ENCODE measurements at regions of chr7 and their contacts with region 1.

Region 1: DNA sequence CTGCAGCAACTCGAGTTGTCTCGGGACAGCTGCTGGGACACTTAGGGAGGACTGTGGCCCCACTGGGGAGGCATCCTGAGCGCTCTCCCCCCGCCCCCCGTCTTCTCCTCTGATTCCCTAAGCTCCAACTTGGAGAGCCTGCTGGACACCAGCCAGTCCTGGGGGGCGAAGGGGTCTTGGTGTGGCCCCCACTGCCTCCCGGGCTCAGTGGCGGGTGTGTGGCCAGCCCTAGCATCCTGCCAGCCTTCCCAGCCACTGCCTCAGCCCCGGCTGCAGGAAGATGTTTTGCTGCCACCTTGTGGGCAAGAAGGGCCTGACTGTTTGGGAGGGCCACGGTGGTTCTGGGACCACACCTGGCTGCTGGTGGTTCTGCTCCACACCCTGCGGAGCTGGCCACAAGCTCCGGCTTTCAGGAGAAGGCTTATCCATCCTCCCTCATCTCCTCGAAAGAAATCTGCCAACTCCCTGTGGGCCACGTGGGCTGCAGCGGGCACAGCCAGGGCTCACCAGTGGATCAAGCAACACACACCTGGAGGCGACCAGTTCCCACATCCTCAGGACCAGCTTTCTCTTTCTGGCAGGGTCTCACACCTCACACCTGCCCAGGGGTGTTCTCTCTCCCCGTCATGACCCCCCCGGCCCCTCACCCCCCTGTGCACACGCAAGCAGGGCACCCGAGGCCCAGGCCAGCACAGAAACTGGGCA is 24.8 kb downstream of the AGAP3 start:
- DNase-seq: no peak
- H3K4me3 ChIP-seq: no peak overlapping the region
- H3K27me3 ChIP-seq: no peaks in the 10 kb centered on the region
- CTCF ChIP-seq: peak; percentile 91

Region 2: GRCh38 chr7:150898475-150899011 is 212.6 kb before region 1 on chr7:
- CTCF ChIA-PET with region 1: interaction called, 16 read pairs
- POLR2A ChIA-PET with region 1: no interaction called
- DNase-seq: no peak
- H3K4me3 ChIP-seq: no peak overlapping the region
- H3K27me3 ChIP-seq: peaks cover 4% of the 10 kb centered on the region
- CTCF ChIP-seq: peak; percentile 96

Region 3: DNA sequence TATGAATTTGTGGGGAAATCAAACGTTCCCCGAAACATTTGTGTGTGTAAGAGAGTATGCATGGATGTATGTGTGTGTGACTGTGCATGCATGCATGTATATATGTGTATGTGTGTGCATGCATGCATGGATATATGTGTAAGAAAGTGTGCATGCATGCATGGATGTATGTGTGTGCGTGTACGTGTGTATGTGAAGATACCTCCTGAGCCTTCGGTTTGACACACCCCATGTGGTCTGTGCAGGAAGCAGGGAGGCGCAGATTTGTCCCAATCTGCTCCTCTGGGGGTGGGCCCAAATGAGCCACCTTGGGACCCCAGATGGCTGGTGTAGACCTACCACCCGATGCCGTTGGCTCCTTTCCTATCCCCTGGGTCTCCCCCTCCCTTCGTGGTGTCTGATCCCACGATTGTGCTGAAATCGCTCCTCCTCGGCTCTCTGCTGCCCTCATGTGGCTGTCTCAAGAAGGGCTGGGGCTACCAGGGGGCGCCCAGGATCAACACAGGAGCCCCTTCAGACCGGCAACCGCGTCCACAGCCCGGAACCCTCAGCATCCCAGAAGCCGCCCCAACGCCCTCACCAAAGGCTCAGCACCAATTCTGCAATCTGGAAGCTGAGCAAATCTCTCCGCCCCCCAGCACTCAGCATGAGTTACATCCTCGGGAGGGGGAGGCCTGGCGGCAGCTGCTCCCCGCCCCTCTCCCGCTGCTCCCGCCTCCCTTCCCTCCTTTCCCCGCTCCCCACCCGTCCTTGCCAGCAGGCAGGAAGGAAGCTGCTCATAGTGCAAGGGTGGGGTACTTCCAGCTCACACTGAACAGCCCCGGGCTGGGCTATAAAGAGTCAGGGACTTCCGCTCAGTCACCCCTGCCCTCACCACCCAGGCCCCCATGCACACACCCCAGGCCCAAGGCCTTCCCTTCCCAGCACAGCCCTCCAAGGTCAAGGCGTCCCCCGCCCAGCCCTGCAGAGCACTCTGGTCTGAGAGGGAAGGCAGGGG is 122.6 kb before region 1 on chr7:
- CTCF ChIA-PET with region 1: interaction called, 14 read pairs
- POLR2A ChIA-PET with region 1: no interaction called
- DNase-seq: no peak
- H3K4me3 ChIP-seq: no peak overlapping the region
- H3K27me3 ChIP-seq: peaks cover 4% of the 10 kb centered on the region
- CTCF ChIP-seq: peak; percentile 84

Region 4: DNA sequence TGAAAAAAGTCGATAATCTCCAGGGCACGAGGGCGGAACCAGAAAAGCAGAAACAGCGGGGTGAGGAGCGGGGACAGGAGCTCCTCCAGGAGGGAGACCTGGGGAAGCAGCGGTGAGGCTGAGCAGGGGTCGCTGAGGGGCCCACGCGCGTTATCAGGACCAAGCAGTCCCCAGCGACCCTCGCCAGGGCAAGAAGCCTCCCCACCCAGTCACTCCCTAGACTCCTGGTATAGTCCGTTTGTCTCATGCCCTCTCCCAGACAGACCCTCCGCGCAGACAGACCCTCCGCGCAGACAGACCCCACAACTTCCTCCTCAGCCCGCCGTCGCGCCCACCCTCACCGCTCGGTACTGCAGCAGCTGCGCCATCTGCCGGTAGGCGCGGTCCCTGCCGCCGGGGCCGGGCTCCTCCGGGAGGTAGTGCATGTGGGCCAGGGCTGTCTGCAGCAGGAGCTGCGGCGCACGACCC is 93.1 kb before region 1 on chr7:
- CTCF ChIA-PET with region 1: interaction called, 91 read pairs
- POLR2A ChIA-PET with region 1: no interaction called
- DNase-seq: no peak
- H3K4me3 ChIP-seq: peak overlapping the region; percentile 14; the same call in 1 of the 2 replicates
- H3K27me3 ChIP-seq: peaks cover 27% of the 10 kb centered on the region
- CTCF ChIP-seq: peak; percentile 98

Region 5: DNA sequence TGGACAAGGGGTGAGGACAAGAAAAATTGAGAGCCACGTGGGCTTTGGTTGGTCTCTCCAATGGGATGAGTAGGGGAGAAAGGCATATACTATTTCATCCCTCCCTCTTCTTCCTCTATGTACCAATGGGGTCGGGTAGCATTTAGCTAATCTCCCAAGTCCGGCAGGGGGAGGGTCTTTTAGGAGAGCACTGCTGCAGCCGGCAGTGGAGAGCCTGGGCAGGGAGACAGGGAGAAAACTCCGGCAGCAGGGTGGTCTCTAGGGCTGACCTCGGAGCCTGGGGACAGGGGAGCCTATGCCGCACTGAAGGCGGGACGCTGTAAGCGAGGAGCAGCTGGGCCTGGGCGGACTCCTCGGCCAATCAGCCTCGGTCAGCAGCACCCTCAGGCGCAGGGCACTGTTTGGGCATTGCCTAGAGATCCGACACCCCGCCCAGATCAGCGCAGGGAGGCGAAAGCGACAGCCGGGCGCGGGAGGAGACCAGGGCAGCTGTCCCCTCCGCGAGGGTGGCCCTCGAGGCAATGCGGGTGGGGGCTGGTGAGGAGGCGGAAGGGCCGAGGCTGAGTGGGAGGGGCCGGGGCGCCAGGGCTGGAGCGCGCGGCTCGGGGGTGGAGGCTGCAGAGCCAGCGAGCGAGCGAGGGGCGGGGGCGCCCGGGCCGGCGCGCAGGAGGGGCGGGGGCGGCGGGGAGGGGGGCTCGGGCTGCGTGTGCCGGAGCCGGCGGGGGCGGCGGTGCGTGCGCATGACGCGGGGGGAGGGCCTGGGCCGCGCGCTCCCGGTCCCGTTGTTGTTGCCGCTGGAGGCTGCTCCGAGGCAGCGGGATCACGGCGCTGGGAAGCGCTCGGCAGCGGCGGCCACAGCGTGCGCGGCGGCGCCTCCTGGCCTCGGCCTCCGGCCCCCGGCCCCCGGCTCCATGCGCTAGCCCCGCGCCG is 25.1 kb before region 1 on chr7 and contains the start of gene AGAP3:
- CTCF ChIA-PET with region 1: interaction called, 143 read pairs
- POLR2A ChIA-PET with region 1: no interaction called
- DNase-seq: no peak
- H3K4me3 ChIP-seq: peak within 1 kb of the TSS; percentile 91
- H3K27me3 ChIP-seq: no peaks in the 10 kb centered on the region
- CTCF ChIP-seq: no peak
- polyA plus RNA-seq, gene AGAP3: 43.9 and 52.1 TPM in 2 replicates

Region 6: DNA sequence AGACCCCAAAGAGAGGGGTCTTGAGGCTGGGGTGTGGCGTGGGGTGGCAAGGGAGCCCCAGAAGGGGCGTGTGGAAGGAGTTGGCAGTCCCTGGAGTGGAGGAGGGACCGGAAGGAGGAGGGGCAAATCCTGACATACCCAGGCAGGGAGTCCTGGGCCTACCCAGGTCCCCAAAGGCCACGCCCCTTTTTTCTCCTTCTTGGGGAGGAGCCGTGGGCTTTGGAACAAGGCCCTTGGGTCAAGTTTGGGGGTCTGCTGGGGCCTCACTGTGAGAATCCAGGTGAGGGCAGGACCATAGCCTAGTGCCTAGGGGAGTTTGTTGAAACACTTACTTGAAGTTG is 138.6 kb after region 1 on chr7:
- CTCF ChIA-PET with region 1: no interaction called
- POLR2A ChIA-PET with region 1: no interaction called
- DNase-seq: no peak
- H3K4me3 ChIP-seq: no peak overlapping the region
- H3K27me3 ChIP-seq: no peaks in the 10 kb centered on the region
- CTCF ChIP-seq: no peak